Calu3 (cell line): ENCODE measurements at regions of chr10 and their contacts with region 1.

Region 1: DNA sequence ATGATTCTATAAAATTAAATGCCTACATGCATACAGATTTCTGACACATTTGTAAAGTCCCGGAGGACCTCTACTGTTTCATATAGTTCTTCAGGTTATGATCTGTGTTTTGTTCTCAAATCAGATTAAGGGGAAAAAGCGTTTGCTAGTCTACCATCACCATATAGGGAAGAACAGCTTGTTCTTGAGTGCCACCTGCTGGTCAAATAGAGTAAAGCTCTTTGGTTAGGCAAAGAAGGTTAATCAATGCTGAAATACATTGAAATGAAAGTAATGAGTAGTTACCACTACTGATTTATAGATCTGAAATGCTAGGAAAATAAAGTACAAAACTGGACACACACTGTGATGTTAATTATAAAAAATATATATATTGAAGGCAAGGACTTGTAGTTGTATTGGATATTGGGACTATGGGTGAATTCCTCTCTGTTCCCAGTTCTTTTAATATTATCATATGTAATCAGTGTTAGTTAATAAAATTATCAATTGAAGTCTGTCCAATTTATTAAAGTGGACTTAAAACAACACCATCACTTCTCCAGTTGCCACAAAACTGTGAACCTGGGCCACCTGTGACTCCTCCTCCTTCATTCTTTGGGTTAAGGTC is 72.6 kb upstream of the PDLIM1 start:
- DNase-seq: peak; percentile 45
- H3K4me3 Mint-ChIP-seq: no peak overlapping the region
- H3K27ac Mint-ChIP-seq: no peak overlapping the region
- H3K4me1 Mint-ChIP-seq: no peaks in the 10 kb centered on the region
- H3K27me3 Mint-ChIP-seq: peaks cover under 1% of the 10 kb centered on the region
- CTCF ChIP-seq: peak; percentile 43

Region 2: GRCh38 chr10:94630017-94630688 is 733.3 kb before region 1 on chr10:
- CTCF ChIA-PET with region 1: no interaction called
- intact Hi-C with region 1: loop called (anchors 5 kb)
- DNase-seq: no peak
- H3K4me3 Mint-ChIP-seq: no peak overlapping the region
- H3K27ac Mint-ChIP-seq: no peak overlapping the region
- H3K4me1 Mint-ChIP-seq: no peaks in the 10 kb centered on the region
- H3K27me3 Mint-ChIP-seq: no peaks in the 10 kb centered on the region
- CTCF ChIP-seq: no peak

Region 3: DNA sequence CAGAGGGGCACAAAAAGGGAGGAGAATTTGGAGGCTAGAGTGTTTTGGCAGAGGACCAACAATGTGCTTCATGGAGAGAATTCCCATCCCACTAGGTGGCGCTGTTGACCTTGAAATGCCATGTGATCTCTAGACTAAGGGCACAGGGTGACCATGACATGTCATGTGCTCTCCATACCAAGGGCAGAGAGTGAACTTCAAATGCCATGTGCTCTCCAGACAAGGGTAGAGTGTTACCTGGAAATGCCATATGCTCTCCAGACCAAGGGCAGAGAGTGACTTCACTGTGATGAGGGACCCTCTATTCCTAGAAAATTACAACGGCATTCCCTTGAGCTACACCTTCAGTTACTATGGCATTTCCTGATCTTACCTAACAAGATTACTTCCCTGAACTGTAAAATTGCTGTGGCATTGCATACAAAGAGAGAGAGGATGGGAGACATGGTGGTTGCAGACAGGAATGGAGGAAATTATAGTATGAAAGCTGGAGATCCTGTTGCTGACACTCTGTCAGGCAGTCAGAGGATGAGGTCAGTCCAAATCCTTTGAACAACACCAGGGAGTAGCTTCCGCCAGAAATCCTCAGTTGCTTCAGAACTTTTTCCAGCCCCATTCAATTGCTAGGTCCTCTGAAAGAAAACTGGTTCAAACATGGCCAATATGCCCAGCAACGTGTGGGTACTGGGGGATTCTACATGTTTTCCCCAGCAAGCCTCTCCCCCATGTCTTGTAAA is 230.2 kb before region 1 on chr10:
- CTCF ChIA-PET with region 1: no interaction called
- intact Hi-C with region 1: loop called (anchors 1 kb)
- DNase-seq: peak; percentile 60
- H3K4me3 Mint-ChIP-seq: no peak overlapping the region
- H3K27ac Mint-ChIP-seq: no peak overlapping the region
- H3K4me1 Mint-ChIP-seq: no peaks in the 10 kb centered on the region
- H3K27me3 Mint-ChIP-seq: peaks cover 15% of the 10 kb centered on the region
- CTCF ChIP-seq: peak; percentile 50

Region 4: GRCh38 chr10:95246579-95247051 is 116.8 kb before region 1 on chr10:
- CTCF ChIA-PET with region 1: interaction called, 38 read pairs
- intact Hi-C with region 1: loop called (anchors 1 kb)
- DNase-seq: peak; percentile 65
- H3K4me3 Mint-ChIP-seq: no peak overlapping the region
- H3K27ac Mint-ChIP-seq: no peak overlapping the region
- H3K4me1 Mint-ChIP-seq: peaks cover 35% of the 10 kb centered on the region
- H3K27me3 Mint-ChIP-seq: no peaks in the 10 kb centered on the region
- CTCF ChIP-seq: peak; percentile 68

Region 5: GRCh38 chr10:95264176-95265051 is 99.0 kb before region 1 on chr10:
- CTCF ChIA-PET with region 1: interaction called, 12 read pairs
- intact Hi-C with region 1: no loop called
- DNase-seq: peak; percentile 34
- H3K4me3 Mint-ChIP-seq: no peak overlapping the region
- H3K27ac Mint-ChIP-seq: peak overlapping the region; percentile 3
- H3K4me1 Mint-ChIP-seq: peaks cover 58% of the 10 kb centered on the region
- H3K27me3 Mint-ChIP-seq: no peaks in the 10 kb centered on the region
- CTCF ChIP-seq: no peak

Region 6: GRCh38 chr10:95308389-95309302 is 54.8 kb before region 1 on chr10:
- CTCF ChIA-PET with region 1: no interaction called
- intact Hi-C with region 1: loop called (anchors 1 kb)
- DNase-seq: peak; percentile 81
- H3K4me3 Mint-ChIP-seq: peak overlapping the region; percentile 48
- H3K27ac Mint-ChIP-seq: peak overlapping the region; percentile 88
- H3K4me1 Mint-ChIP-seq: peaks cover 35% of the 10 kb centered on the region
- H3K27me3 Mint-ChIP-seq: peaks cover 10% of the 10 kb centered on the region
- CTCF ChIP-seq: no peak

Region 7: GRCh38 chr10:95423164-95424005 is 60.0 kb after region 1 on chr10:
- CTCF ChIA-PET with region 1: no interaction called
- intact Hi-C with region 1: no loop called
- DNase-seq: no peak
- H3K4me3 Mint-ChIP-seq: no peak overlapping the region
- H3K27ac Mint-ChIP-seq: no peak overlapping the region
- H3K4me1 Mint-ChIP-seq: no peaks in the 10 kb centered on the region
- H3K27me3 Mint-ChIP-seq: no peaks in the 10 kb centered on the region
- CTCF ChIP-seq: no peak